Activated T-helper 1 cell treated with anti-CD3 and anti-CD28 coated beads, Interleukin-12 subunit alpha, Interleukin-12 subunit beta, Interleukin-2, Interleukin-4 antibody, amounts not matched to agents 30 ng/mL and 10 ng/mL and 1 ng/mL, durations not matched to agents 14 hours and 24 hours and 36 hours (primary cell): ENCODE measurements at regions of chr1 and their contacts with region 1.

Region 1: GRCh38 chr1:246724016-246724730 is at the start of gene SCCPDH:
- DNase-seq: peak; percentile 55
- H3K4me3 Mint-ChIP-seq: peak within 1 kb of the TSS; percentile 92
- H3K27ac Mint-ChIP-seq: peak within 1 kb of the TSS; percentile 78
- H3K4me1 Mint-ChIP-seq: peaks cover 10% of the 10 kb centered on the region
- H3K27me3 Mint-ChIP-seq: peaks cover 6% of the 10 kb centered on the region
- total RNA-seq, gene SCCPDH: 23.5 and 24.3 TPM in 2 replicates

Region 2: GRCh38 chr1:246506674-246507481 is 217.3 kb before region 1 on chr1 and contains the start of gene SMYD3:
- intact Hi-C with region 1: loop called (anchors 10 kb)
- DNase-seq: peak; percentile 71
- H3K4me3 Mint-ChIP-seq: peak within 1 kb of the TSS; percentile 97
- H3K27ac Mint-ChIP-seq: peak within 1 kb of the TSS; percentile 84
- H3K4me1 Mint-ChIP-seq: peaks cover 26% of the 10 kb centered on the region
- H3K27me3 Mint-ChIP-seq: no peaks in the 10 kb centered on the region
- total RNA-seq, gene SMYD3: 21.7 and 21.8 TPM in 2 replicates

Region 3: DNA sequence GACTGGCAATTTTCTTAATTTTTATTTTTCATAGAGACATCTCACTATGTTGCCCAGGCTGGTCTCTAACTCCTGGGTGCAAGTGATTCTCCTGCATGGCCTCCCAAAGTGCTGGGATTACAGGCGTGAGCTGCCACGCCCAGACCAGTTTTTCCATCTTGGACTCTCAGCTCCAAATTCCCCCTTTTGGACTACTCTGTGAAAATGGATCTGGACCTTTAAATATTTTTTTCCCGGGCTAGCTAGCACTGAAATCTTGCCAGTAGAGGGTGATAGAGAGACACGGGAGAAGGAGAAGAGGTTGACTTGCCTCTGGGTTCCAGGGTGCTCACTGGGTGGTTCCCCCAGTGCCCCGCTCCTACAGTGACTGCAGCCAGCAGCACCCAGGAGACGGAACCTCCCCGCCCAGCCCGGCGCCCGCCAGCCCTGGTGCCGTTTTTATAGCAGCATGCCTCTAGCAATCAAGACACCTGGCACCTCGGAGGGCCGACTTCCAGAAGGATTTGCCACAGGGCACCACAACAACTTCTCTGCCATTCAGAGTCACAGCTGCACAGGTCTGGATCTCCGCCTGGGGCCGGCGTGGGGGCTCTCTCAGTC is 34.7 kb before region 1 on chr1:
- intact Hi-C with region 1: loop called (anchors 1 kb)
- DNase-seq: peak; percentile 20
- H3K4me3 Mint-ChIP-seq: no peak overlapping the region
- H3K27ac Mint-ChIP-seq: no peak overlapping the region
- H3K4me1 Mint-ChIP-seq: no peaks in the 10 kb centered on the region
- H3K27me3 Mint-ChIP-seq: peaks cover 2% of the 10 kb centered on the region